Naive thymus-derived CD4-positive, alpha-beta T cell (primary cell): ENCODE measurements at regions of chr20 and their contacts with region 1.

Region 1: GRCh38 chr20:19661717-19662636 is 96.1 kb upstream of the RIN2 start:
- DNase-seq: peak in 7 of 9 donors; percentile 2 to 38 (median 29)
- ATAC-seq: peak; percentile 71
- H3K4me3 ChIP-seq: no peak overlapping the region
- H3K4me3 Mint-ChIP-seq: no peak overlapping the region
- H3K27ac ChIP-seq: no peak overlapping the region
- H3K27ac Mint-ChIP-seq: no peak overlapping the region
- H3K4me1 ChIP-seq: no peaks in the 10 kb centered on the region
- H3K4me1 Mint-ChIP-seq: peaks cover 0 to 5% (median 0%) of the 10 kb centered on the region in 7 donors
- H3K27me3 ChIP-seq: no peaks in the 10 kb centered on the region
- H3K27me3 Mint-ChIP-seq: peaks cover 5 to 52% (median 25%) of the 10 kb centered on the region in 5 donors

Region 2: DNA sequence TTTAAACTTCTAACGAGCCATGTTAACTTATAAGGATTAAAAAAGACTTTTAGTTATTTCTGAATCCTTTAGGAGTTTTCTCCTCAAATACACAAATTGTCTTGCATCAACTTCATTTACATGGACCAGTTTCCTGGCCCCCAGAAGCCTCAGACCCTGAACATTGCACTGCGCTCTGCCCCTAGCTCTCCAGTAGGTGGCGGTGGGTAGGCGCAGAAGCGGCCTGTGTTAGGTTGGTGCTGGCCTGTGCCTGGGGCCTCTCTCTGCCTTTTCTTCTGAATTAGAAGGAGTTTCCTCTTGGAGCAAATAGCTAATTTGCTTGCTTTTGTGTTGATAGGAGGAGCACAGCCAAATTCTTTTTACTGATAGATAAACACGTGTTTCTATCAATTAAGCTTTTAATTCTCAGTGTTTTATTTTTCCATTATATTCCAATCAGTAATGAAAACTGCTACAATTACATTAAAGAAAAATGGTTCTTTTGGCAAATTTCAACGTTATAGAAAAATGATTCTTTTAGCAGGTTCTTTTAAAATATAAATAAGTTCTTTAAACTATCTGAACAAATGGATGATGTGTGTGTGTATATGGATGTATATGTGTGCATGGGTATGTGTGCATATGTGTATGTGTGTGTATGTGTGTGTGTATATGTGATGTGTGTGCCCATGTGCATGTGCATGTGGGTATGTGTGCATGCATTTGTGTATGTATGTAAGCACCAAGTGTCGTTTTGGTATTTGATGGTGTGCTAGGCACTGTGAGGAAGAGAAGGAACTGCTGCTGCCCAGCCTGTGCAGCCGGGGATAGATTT is 1029.6 kb before region 1 on chr20:
- CTCF ChIA-PET with region 1: no interaction called
- POLR2A ChIA-PET with region 1: no interaction called
- intact Hi-C with region 1: loop called in 1 of 2 experiments (anchors 5 kb)
- DNase-seq: peak in 8 of 9 donors; percentile 1 to 52 (median 32)
- ATAC-seq: peak; percentile 80
- H3K4me3 ChIP-seq: no peak overlapping the region
- H3K4me3 Mint-ChIP-seq: no peak overlapping the region
- H3K27ac ChIP-seq: no peak overlapping the region
- H3K27ac Mint-ChIP-seq: no peak overlapping the region
- H3K4me1 ChIP-seq: no peaks in the 10 kb centered on the region
- H3K4me1 Mint-ChIP-seq: peaks cover 0 to 4% (median 0%) of the 10 kb centered on the region in 7 donors
- H3K27me3 ChIP-seq: no peaks in the 10 kb centered on the region
- H3K27me3 Mint-ChIP-seq: no peaks in the 10 kb centered on the region

Region 3: DNA sequence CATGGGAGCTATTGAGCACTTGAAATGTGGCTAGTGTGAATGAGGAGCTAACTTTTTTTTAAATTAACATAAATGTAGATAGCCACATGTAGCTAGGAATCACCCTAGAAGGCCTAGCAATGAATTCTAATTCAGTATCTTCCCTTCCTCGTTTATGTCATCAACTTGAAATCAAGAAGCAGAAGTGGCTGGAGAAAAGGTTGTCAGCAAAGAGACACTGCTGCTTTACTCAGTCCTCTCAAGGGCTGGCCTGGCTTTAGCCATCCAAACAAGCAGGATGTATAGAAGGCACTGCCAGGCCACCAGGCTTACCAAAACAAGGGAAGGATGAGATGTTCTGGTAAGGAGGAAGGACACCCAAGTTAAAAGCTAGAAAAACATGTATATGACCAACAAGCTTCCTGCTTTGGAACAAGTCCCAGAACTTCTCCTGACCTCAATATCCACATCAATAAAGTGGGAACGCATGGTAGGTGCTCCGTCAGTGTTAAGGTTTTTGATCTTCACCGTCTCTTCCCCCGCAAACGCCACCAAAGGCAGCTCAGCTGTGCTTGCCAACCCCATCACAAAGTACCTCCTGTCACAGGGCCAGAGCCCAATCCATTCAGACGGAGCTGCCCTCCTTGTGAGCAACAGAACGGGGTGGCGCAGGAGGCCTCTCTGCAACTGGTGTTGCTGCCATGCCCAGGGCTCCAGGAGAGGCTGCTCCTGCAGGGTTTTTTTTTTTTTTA is 139.7 kb before region 1 on chr20:
- CTCF ChIA-PET with region 1: no interaction called
- POLR2A ChIA-PET with region 1: no interaction called
- intact Hi-C with region 1: no loop called
- DNase-seq: peak in 5 of 9 donors; percentile 9 to 29 (median 17)
- ATAC-seq: no peak
- H3K4me3 ChIP-seq: no peak overlapping the region
- H3K4me3 Mint-ChIP-seq: peak overlapping the region in 6 of 10 donors; percentile 1 to 63 (median 28)
- H3K27ac ChIP-seq: no peak overlapping the region
- H3K27ac Mint-ChIP-seq: peak overlapping the region in 5 of 9 donors; percentile 1 to 80 (median 57)
- H3K4me1 ChIP-seq: no peaks in the 10 kb centered on the region
- H3K4me1 Mint-ChIP-seq: peaks cover 1 to 38% (median 20%) of the 10 kb centered on the region in 7 donors
- H3K27me3 ChIP-seq: no peaks in the 10 kb centered on the region
- H3K27me3 Mint-ChIP-seq: peaks cover 0 to 14% (median 4%) of the 10 kb centered on the region in 5 donors

Region 4: DNA sequence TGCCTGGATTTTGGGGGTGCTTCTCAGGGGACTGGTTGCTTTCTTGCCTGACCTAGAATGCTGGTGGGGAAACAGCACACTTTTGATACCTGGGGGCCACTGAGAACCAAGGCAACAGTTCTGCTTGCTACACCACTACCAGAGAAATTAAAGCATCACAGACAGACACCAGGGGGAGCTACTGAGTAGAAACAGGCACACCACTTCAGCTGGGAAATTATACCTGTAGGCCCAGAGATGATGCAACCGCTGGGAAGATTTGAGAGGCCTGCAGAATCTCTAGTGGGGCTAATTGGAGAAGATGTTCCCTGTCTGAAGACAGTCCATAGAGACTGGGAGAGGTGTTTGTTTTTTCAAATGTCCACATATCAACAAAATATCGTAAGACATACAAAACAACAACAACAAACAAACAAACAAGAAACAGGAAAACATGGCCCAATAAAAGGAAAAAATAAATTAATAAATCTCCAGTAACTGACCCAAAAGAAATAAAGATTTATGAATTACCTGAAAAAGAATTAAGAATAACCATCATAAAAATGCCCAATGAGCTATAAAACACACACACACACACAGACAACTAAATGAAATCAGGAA is 33.3 kb before region 1 on chr20:
- CTCF ChIA-PET with region 1: no interaction called
- POLR2A ChIA-PET with region 1: no interaction called
- intact Hi-C with region 1: loop called in 1 of 2 experiments (anchors 1 kb)
- DNase-seq: peak in 6 of 9 donors; percentile 3 to 27 (median 8)
- ATAC-seq: peak; percentile 54
- H3K4me3 ChIP-seq: no peak overlapping the region
- H3K4me3 Mint-ChIP-seq: no peak overlapping the region
- H3K27ac ChIP-seq: no peak overlapping the region
- H3K27ac Mint-ChIP-seq: no peak overlapping the region
- H3K4me1 ChIP-seq: no peaks in the 10 kb centered on the region
- H3K4me1 Mint-ChIP-seq: no peaks in the 10 kb centered on the region
- H3K27me3 ChIP-seq: no peaks in the 10 kb centered on the region
- H3K27me3 Mint-ChIP-seq: peaks cover 0 to 32% (median 10%) of the 10 kb centered on the region in 5 donors

Region 5: DNA sequence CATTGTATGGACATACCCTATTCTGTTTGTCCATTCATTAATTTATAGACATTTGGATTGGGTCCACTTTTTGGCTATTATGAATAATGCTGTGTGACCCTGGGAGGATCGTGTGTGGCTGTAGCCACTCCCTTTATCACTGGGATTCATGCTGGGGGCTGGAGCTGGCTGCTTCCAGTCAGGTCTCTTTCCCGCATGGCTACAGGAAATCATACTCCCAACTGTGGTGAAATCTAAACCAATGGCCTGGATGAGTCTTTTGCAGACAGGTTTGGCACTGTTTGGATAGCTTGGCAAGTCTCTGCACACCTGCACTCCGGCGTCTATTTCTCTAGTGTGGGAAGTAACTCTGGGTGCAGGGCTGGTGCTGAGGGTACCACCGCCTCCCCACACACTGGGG is 176.5 kb after region 1 on chr20:
- CTCF ChIA-PET with region 1: no interaction called
- POLR2A ChIA-PET with region 1: no interaction called
- intact Hi-C with region 1: no loop called
- DNase-seq: no peak
- ATAC-seq: no peak
- H3K4me3 ChIP-seq: no peak overlapping the region
- H3K4me3 Mint-ChIP-seq: no peak overlapping the region
- H3K27ac ChIP-seq: no peak overlapping the region
- H3K27ac Mint-ChIP-seq: no peak overlapping the region
- H3K4me1 ChIP-seq: no peaks in the 10 kb centered on the region
- H3K4me1 Mint-ChIP-seq: peaks cover 0 to 2% (median 0%) of the 10 kb centered on the region in 7 donors
- H3K27me3 ChIP-seq: no peaks in the 10 kb centered on the region
- H3K27me3 Mint-ChIP-seq: peaks cover 3 to 7% (median 4%) of the 10 kb centered on the region in 5 donors